ENCODE measurements at regions of chr17 and their contacts with region 1.

Region 1: GRCh38 chr17:35088881-35089585 is 25.5 kb upstream of the RFFL start:
- DNase-seq: peak; percentile 78 to 90 (median 89)
- H3K4me3 ChIP-seq: peak overlapping the region; percentile 58 to 95 (median 90)
- H3K27ac ChIP-seq: peak overlapping the region; percentile 72 to 84
- H3K4me1 ChIP-seq: peaks cover 12 to 35% (median 27%) of the 10 kb centered on the region in 4 experiments
- H3K27me3 ChIP-seq: no peaks in the 10 kb centered on the region

Region 2: GRCh38 chr17:34990921-34991365 is 98.1 kb before region 1 on chr17:
- CTCF ChIA-PET with region 1: interaction called, 31 read pairs
- POLR2A ChIA-PET with region 1: no interaction called
- DNase-seq: peak in 1 of 3 donors; percentile 24
- H3K4me3 ChIP-seq: no peak overlapping the region
- H3K27ac ChIP-seq: no peak overlapping the region
- H3K4me1 ChIP-seq: peaks cover 0 to 14% (median 4%) of the 10 kb centered on the region in 4 experiments
- H3K27me3 ChIP-seq: no peaks in the 10 kb centered on the region

Region 3: DNA sequence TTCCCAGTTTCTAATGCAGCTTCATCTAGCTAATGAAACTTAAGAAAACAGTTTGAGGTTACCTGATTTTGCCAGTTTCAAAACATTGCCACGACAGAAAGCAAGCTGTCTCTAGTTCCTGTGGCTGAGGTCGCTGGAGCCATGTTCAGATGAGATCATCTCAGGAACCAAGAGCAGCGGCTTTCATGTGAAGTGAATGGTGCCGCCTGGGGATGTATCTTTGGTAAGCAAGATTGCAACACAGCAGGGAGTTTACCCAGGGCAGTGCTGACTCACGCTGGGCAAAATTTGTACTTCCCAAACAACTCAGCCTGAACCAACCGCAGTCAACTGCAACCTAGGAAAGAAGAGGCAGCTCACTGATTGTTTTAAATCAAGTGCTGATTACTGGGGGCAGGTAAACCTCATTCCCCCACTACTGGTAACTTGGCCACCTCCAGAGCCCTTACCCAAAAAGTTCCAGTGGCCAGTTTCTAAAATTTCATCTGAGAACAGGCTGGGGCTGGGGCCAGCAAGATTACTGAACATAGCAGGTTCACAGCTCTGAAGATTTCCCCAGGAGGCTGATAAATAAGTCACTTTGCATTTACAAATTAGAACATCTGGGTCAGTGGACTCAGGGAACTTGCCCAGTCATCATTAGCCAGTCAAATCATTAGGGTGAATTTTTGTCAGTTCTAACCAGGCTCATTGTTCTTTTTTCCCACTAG is 25.4 kb before region 1 on chr17 and contains the start of gene RFFL:
- CTCF ChIA-PET with region 1: interaction called, 16 read pairs
- POLR2A ChIA-PET with region 1: interaction called, 6 read pairs
- DNase-seq: peak; percentile 97 to 99 (median 98)
- H3K4me3 ChIP-seq: peak within 1 kb of the TSS in 6 of 7 experiments; percentile 38 to 74 (median 54)
- H3K27ac ChIP-seq: peak within 1 kb of the TSS; percentile 77 to 88
- H3K4me1 ChIP-seq: peaks cover 17 to 53% (median 25%) of the 10 kb centered on the region in 4 experiments
- H3K27me3 ChIP-seq: no peaks in the 10 kb centered on the region

Region 4: DNA sequence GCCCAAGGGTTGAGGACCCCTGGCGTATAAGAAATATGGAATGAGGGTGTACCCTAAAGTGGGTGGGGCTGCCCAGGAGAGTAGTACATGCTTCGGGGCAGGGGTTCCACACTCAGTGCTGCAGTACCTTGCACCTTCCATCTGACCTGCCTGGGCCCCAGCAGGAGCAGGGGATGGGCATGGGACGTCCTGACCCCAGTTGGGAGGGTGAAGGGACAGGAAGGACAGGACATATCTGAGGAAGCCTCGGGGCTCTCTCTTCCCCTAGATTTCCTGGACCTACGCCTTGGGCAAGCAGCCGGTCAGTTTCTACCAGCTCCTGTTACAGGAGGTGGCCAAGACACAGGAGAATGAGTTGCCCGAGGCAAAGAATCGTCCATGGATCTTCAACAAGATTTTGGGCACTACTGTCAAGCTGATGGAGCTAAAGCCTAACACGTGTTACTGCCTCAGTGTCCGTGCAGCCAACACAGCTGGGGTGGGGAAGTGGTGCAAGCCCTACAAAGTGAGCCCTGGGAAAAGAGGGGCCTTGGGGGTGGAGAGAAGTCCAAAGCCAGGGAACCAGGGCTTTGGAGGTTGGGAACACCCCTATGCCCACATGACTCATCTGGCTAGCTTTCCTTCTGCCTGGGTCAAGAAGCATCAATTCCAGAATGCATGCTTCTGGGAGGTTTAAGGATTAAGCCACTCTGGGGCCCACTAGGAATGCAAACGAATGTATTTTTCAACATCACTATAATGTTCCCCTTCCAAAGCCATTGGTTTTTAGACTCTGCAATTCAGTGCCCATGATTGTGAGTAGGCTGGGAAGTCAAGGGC is 40.3 kb after region 1 on chr17:
- CTCF ChIA-PET with region 1: no interaction called
- POLR2A ChIA-PET with region 1: no interaction called
- DNase-seq: no peak
- H3K4me3 ChIP-seq: no peak overlapping the region
- H3K27ac ChIP-seq: no peak overlapping the region
- H3K4me1 ChIP-seq: peaks cover 0 to 14% (median 5%) of the 10 kb centered on the region in 4 experiments
- H3K27me3 ChIP-seq: no peaks in the 10 kb centered on the region

Measured in common myeloid progenitor, CD34-positive (primary cell).